Natural killer cell (primary cell): ENCODE measurements at regions of chr12 and their contacts with region 1.

Region 1: GRCh38 chr12:90959538-90960139 is 4.7 kb upstream of the CCER1 start:
- DNase-seq: peak in 1 of 2 donors; percentile 60
- ATAC-seq: peak in 2 of 3 donors; percentile 67 to 78
- H3K4me3 ChIP-seq: no peak overlapping the region
- H3K4me3 Mint-ChIP-seq: no peak overlapping the region
- H3K27ac ChIP-seq: no peak overlapping the region
- H3K27ac Mint-ChIP-seq: no peak overlapping the region
- H3K4me1 ChIP-seq: no peaks in the 10 kb centered on the region
- H3K4me1 Mint-ChIP-seq: no peaks in the 10 kb centered on the region
- H3K27me3 ChIP-seq: no peaks in the 10 kb centered on the region
- H3K27me3 Mint-ChIP-seq: no peaks in the 10 kb centered on the region
- CTCF ChIP-seq: peak; percentile 66

Region 2: DNA sequence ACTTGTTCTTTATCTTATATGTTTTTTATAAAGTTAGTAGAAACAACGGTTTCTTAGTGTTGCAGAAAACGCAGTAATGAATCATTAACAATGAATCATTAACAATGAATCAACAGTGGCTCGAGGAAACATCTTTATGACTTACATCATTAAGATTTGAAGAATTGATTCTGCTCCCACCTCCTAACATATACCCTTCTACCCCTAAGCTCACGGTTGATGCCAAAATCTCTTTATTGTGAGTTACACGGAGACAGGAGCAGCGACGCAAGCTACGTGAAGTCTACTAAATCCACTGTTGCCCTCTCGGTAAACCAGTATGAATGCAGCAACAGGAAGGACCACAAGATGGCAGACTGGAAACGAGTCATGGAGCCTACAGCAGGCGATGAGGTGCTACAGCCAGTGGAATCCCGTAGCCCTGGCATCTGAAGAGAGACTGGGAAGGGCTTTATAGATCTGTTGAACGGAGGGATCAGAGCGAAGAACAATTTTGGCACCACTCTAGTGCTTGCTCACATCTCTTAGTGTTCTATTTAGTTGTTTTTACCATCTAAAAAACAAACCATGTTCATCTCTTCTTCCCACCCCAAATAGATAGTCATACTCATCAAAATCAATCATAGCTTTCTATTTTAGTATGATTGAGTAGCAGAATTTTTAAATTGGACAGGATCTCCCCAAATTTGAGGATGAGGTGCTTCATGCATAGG is 1940.1 kb before region 1 on chr12:
- intact Hi-C with region 1: loop called (anchors 2 kb)
- DNase-seq: peak; percentile 55 to 86
- ATAC-seq: peak; percentile 91 to 99 (median 97)
- H3K4me3 ChIP-seq: no peak overlapping the region
- H3K4me3 Mint-ChIP-seq: no peak overlapping the region
- H3K27ac ChIP-seq: no peak overlapping the region
- H3K27ac Mint-ChIP-seq: no peak overlapping the region
- H3K4me1 ChIP-seq: peaks cover 4% of the 10 kb centered on the region
- H3K4me1 Mint-ChIP-seq: peaks cover 5 to 7% of the 10 kb centered on the region in 2 donors
- H3K27me3 ChIP-seq: no peaks in the 10 kb centered on the region
- H3K27me3 Mint-ChIP-seq: peaks cover 0 to 6% of the 10 kb centered on the region in 2 donors
- CTCF ChIP-seq: peak; percentile 72